ENCODE measurements at regions of chr6 and their contacts with region 1.

Region 1: DNA sequence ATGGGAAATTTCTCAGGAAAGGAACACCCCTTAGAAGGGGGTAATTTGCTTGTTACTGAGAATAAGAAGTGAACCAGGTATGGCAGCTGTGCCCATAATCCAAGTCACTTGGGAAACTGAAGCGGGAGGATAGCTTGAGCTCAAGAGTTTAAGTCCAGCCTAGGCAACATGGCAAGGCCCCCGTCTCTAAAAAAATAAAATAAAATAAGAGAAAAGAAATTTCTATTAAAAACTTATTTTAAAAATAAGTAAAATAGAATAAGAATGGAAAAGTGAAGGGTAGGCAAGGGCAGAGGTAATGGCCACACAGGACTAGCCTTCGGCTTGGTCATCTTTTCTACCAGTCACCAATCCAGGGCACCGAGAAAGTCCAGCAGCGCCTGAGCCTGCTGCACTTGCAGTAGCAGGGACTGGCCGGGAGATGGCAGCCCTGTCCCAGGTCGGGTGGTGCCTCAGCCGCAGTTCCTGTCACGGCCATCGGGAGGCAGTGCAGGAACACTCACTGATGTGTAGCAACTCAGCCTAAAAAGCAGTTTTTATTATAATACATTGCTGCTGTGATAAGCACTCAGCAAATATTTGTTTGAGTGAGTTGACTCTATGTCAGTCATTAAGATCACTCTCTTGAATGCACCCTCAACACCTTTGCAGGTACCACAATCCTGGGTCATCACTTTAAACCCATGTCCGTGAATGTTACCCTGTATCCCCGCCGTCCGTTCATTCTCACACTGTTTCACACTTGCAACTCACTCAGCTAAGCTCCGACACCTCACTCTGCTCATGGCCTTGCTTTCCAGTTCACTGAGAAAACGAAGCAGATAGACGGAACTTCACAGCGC is 23.2 kb upstream of the GCM1 start:
- DNase-seq: peak; percentile 82
- H3K4me3 Mint-ChIP-seq: no peak overlapping the region
- H3K27ac Mint-ChIP-seq: no peak overlapping the region
- H3K4me1 Mint-ChIP-seq: no peaks in the 10 kb centered on the region
- H3K27me3 Mint-ChIP-seq: no peaks in the 10 kb centered on the region

Region 2: DNA sequence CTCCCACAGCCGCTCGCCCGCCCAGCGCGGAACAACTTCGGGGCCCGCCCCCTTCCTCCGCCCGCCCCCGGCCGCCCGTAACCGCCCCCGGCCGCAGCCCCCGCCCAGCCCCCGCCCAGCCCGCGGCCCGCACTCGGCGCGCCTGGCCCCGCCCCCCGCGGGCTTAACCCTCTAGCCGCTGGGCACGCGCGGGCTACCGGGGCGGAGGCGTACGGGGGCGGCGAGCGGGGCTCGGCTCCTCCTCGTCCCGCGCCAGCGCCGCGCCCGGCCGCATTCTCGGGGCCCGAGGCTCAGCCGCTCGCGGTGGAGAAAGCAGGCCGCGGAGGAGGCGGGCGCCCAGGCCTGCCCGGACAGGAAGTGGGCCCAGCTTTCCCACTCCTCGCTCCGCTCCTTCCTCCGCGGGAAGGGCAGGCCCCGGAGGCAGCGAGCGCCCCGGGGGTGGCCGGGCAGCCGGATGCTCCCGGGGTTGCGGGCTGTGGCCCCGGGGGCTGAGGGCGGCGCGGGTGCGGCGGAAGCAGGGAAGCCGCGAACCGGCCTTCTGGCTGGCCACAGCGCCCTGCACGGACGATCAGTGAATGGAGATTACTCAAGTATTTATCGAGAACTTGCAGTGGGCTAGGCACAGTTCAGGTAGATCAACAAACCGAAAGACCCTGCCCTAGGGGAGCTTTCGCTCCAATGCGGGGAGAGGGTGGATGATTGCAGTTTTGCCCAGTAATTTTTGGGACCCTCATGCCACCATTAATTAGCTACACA is 594.6 kb before region 1 on chr6 and contains the start of gene TRAM2:
- intact Hi-C with region 1: no loop called
- DNase-seq: peak; percentile 69
- H3K4me3 Mint-ChIP-seq: peak within 1 kb of the TSS; percentile 79
- H3K27ac Mint-ChIP-seq: peak within 1 kb of the TSS; percentile 66
- H3K4me1 Mint-ChIP-seq: peaks cover 39% of the 10 kb centered on the region
- H3K27me3 Mint-ChIP-seq: peaks cover 14% of the 10 kb centered on the region
- total RNA-seq, gene TRAM2: 2.1 and 2.5 TPM in 2 replicates

Region 3: DNA sequence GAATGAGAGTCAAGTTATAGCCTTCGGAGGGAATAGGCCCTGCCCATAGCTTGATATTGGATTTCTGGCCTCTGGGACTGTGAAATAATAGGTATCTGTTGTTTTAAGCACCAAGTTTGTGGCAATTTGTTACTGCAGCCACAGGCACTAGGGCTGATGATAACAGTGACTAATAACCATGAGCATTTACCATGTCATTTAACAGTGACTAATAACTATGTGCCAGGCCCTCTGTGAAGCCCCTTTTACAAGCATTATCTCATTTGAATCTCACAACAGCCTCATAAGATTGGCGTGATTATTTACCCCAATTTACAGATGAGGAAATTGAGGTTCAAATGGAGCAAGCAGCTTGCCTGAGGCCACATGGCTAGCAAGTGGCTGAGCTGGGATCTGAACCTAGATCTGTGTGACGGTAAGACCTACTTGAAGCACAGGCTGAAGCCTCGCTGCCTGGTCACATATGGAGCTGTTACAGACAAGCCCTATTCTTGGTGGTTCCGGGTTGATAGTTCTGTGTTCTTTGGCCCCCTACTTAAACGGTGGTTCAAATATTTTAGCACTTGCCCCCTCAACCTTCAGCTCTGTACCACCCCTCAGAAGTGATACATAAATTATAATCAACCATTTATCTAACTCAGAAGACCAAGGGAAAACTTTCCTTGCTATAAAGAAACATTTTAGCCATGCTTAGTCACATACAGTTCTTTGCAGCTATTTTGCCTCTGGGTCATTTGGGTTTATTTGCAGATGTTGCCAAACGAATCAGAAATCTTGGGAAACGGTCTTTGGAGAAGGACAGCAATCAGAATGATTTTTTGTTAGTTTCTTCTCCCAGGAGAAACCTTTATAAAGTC is 78.6 kb after region 1 on chr6:
- intact Hi-C with region 1: loop called (anchors 5 kb)
- DNase-seq: no peak
- H3K4me3 Mint-ChIP-seq: no peak overlapping the region
- H3K27ac Mint-ChIP-seq: no peak overlapping the region
- H3K4me1 Mint-ChIP-seq: no peaks in the 10 kb centered on the region
- H3K27me3 Mint-ChIP-seq: no peaks in the 10 kb centered on the region

Region 4: GRCh38 chr6:53284901-53285300 is 113.1 kb after region 1 on chr6:
- intact Hi-C with region 1: loop called (anchors 10 kb)
- DNase-seq: no peak
- H3K4me3 Mint-ChIP-seq: no peak overlapping the region
- H3K27ac Mint-ChIP-seq: peak overlapping the region; percentile 31
- H3K4me1 Mint-ChIP-seq: peaks cover 30% of the 10 kb centered on the region
- H3K27me3 Mint-ChIP-seq: no peaks in the 10 kb centered on the region

Region 5: DNA sequence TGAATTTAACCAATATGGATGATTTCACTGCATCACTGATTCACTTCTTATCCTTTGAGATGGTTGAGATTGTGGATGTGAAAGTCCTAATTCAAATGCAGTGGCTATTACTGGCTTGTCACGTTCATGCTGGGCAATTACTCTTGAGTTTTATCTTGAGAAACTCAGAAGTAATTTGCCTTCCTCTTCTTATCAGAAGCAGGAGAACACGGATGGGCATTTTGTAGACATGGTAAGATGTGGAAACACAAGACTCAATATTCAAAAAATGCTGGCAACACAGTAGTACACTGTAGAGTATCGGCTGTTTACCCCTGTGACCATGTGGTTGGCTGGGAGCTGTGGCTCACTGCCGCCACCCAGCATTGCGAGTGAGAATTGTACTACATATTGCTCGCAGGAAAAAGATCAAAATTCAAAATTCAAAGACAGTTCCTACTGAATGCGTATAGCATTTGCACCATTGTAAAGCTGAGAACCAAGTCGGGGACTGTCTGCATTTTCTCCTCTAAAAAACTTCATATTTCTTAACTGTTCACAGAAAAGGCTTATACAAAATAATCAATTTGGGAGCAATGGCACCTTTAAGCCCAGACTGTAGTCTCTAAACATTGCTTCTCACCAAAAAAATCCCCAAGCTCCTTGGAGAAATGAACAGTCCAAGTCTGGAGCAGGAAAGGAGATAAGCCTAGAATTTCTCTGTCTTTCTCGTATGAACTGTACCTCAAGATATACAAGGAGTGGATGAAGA is 238.9 kb after region 1 on chr6:
- intact Hi-C with region 1: loop called (anchors 1 kb)
- DNase-seq: peak; percentile 32
- H3K4me3 Mint-ChIP-seq: no peak overlapping the region
- H3K27ac Mint-ChIP-seq: no peak overlapping the region
- H3K4me1 Mint-ChIP-seq: no peaks in the 10 kb centered on the region
- H3K27me3 Mint-ChIP-seq: peaks cover 2% of the 10 kb centered on the region

Region 6: GRCh38 chr6:53437557-53438202 is 265.9 kb after region 1 on chr6:
- intact Hi-C with region 1: loop called (anchors 1 kb)
- DNase-seq: no peak
- H3K4me3 Mint-ChIP-seq: no peak overlapping the region
- H3K27ac Mint-ChIP-seq: peak overlapping the region; percentile 24
- H3K4me1 Mint-ChIP-seq: peaks cover 25% of the 10 kb centered on the region
- H3K27me3 Mint-ChIP-seq: peaks cover 4% of the 10 kb centered on the region

Region 7: DNA sequence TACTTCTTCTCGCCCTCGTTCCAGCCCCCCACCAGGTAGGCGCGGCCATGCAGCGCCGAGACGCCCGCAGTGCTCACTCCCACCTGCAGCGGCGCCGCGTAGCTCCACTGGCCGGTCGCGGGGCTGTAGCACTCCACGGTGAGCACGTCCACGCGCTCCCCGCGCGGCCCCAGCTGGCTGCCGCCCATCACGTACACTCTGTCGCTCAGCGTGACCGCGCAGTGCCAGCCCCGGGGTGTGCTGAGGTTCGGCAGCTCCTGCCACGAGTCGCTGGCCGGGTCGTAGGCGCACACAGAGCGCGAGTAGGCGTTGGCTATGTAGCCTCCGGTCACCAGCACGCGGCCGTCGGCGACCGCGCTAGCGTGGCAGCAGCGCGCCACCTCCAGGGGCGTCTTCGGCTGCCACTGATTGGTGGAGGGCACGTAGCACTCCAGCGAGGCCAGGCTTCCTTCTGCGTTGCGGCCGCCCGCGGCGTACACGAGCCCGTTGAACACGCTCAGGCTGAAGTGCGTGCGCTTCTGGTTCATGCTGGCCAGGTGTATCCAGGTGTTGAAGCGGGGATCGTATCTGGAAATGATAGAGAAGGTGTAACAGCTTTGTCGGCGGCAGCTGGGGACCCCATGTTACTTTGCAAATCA is 480.1 kb after region 1 on chr6:
- intact Hi-C with region 1: loop called (anchors 1 kb)
- DNase-seq: peak; percentile 64
- H3K4me3 Mint-ChIP-seq: peak overlapping the region; percentile 90
- H3K27ac Mint-ChIP-seq: peak overlapping the region; percentile 81
- H3K4me1 Mint-ChIP-seq: peaks cover 31% of the 10 kb centered on the region
- H3K27me3 Mint-ChIP-seq: peaks cover 30% of the 10 kb centered on the region

Region 8: DNA sequence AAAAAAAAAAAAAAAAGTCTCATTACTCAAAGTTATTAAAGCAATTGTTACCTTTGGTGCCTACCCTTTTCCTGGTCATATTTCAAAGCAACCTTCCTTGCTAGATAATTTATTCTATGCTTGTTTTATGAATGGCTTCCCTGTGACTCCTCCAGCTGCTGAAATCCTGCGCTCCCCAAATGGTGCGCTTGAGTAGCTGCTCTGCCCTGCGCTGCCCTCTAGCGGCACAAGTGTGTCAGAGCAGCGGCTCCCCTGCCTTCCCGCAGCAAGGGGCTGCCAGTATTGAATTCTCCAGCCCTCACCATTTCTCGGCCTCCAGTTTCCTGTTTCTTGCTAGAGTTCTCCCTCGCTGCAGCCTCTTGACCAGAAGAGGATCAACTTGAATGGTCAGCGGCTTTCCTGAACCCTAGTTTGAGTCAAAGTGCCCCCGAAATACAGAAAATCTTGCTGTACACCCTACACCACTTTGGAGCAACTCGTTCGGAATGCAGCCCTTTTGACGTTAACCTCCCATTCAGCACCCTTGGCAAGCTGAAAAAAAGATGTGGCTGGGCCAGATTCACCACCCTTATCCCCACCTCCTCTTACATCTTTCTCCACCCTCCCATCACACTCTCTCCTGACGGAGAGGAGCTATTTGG is 554.1 kb after region 1 on chr6:
- intact Hi-C with region 1: loop called (anchors 1 kb)
- DNase-seq: peak; percentile 60
- H3K4me3 Mint-ChIP-seq: no peak overlapping the region
- H3K27ac Mint-ChIP-seq: no peak overlapping the region
- H3K4me1 Mint-ChIP-seq: peaks cover 14% of the 10 kb centered on the region
- H3K27me3 Mint-ChIP-seq: peaks cover 14% of the 10 kb centered on the region